Naive thymus-derived CD4-positive, alpha-beta T cell (primary cell): ENCODE measurements at regions of chr19 and their contacts with region 1.

Region 1: GRCh38 chr19:58182989-58183816 is at the start of gene ZNF274:
- DNase-seq: peak; percentile 88 to 95 (median 93)
- ATAC-seq: peak; percentile 92
- H3K4me3 ChIP-seq: peak within 1 kb of the TSS; percentile 87
- H3K4me3 Mint-ChIP-seq: peak within 1 kb of the TSS; percentile 91 to 99 (median 94)
- H3K27ac ChIP-seq: peak within 1 kb of the TSS; percentile 97
- H3K27ac Mint-ChIP-seq: peak within 1 kb of the TSS; percentile 98 to 100 (median 99)
- H3K4me1 ChIP-seq: peaks cover 0 to 12% of the 10 kb centered on the region in 2 donors
- H3K4me1 Mint-ChIP-seq: peaks cover 10 to 24% (median 17%) of the 10 kb centered on the region in 7 donors
- H3K27me3 ChIP-seq: no peaks in the 10 kb centered on the region
- H3K27me3 Mint-ChIP-seq: no peaks in the 10 kb centered on the region
- total RNA-seq, gene ZNF274: 20.1 to 91.1 (median 52.7) TPM

Region 2: DNA sequence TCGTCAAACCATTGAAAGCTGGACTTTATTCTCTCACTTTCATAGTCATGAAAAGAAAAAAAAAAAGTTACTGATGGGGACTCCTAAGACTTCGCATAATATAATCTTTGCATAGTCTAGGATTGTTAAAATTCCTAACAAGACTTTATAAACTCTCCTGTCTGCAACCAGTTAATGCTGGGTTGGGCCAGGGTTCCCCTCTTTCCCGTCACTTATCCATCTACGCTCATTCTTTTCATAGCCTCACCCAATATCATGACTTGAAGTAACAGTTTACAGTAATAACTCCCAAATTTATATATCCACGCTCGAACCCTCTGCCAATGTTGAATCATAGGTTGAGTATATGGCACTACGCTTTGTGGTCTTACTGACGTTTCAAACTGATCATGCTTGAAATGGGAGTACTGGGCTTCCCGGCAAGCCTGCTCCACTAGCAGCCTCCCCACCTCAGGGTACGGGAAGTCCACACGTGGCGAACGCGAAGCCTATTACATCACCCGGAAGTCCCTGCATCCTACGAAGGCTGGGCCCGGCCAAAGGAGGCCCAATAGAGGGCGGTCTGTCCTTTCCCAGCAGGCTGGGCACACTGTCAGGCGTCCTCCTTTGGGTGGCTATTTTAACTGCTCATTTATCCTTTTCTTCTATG is 903.7 kb before region 1 on chr19:
- CTCF ChIA-PET with region 1: no interaction called
- POLR2A ChIA-PET with region 1: no interaction called
- intact Hi-C with region 1: loop called in 1 of 2 experiments (anchors 1 kb)
- DNase-seq: peak in 6 of 9 donors; percentile 60 to 81 (median 78)
- ATAC-seq: peak; percentile 85
- H3K4me3 ChIP-seq: peak overlapping the region; percentile 80
- H3K4me3 Mint-ChIP-seq: no peak overlapping the region
- H3K27ac ChIP-seq: peak overlapping the region; percentile 98
- H3K27ac Mint-ChIP-seq: peak overlapping the region in 2 of 9 donors; percentile 6 to 51
- H3K4me1 ChIP-seq: peaks cover 18 to 23% of the 10 kb centered on the region in 2 donors
- H3K4me1 Mint-ChIP-seq: peaks cover 7 to 33% (median 25%) of the 10 kb centered on the region in 7 donors
- H3K27me3 ChIP-seq: no peaks in the 10 kb centered on the region
- H3K27me3 Mint-ChIP-seq: no peaks in the 10 kb centered on the region

Region 3: GRCh38 chr19:57746580-57747471 is 436.4 kb before region 1 on chr19 and contains the start of gene ZNF776:
- CTCF ChIA-PET with region 1: no interaction called
- POLR2A ChIA-PET with region 1: no interaction called
- intact Hi-C with region 1: loop called (anchors 1 kb)
- DNase-seq: peak; percentile 40 to 90 (median 84)
- ATAC-seq: peak; percentile 99
- H3K4me3 ChIP-seq: peak within 1 kb of the TSS; percentile 86
- H3K4me3 Mint-ChIP-seq: peak within 1 kb of the TSS; percentile 91 to 99 (median 94)
- H3K27ac ChIP-seq: peak within 1 kb of the TSS; percentile 85
- H3K27ac Mint-ChIP-seq: peak within 1 kb of the TSS; percentile 81 to 99 (median 94)
- H3K4me1 ChIP-seq: peaks cover 6 to 16% of the 10 kb centered on the region in 2 donors
- H3K4me1 Mint-ChIP-seq: peaks cover 13 to 40% (median 26%) of the 10 kb centered on the region in 7 donors
- H3K27me3 ChIP-seq: no peaks in the 10 kb centered on the region
- H3K27me3 Mint-ChIP-seq: no peaks in the 10 kb centered on the region
- total RNA-seq, gene ZNF776: 18.9 to 52.3 (median 21.8) TPM

Region 4: GRCh38 chr19:58196901-58197616 is 13.9 kb after region 1 on chr19:
- CTCF ChIA-PET with region 1: interaction called, 3 read pairs
- POLR2A ChIA-PET with region 1: interaction called, 27 read pairs
- intact Hi-C with region 1: no loop called
- DNase-seq: peak in 4 of 9 donors; percentile 19 to 37 (median 30)
- ATAC-seq: no peak
- H3K4me3 ChIP-seq: peak overlapping the region; percentile 3
- H3K4me3 Mint-ChIP-seq: peak overlapping the region in 2 of 10 donors; percentile 7 to 16
- H3K27ac ChIP-seq: no peak overlapping the region
- H3K27ac Mint-ChIP-seq: peak overlapping the region in 1 of 9 donors; percentile 17
- H3K4me1 ChIP-seq: no peaks in the 10 kb centered on the region
- H3K4me1 Mint-ChIP-seq: peaks cover 0 to 5% (median 0%) of the 10 kb centered on the region in 7 donors
- H3K27me3 ChIP-seq: no peaks in the 10 kb centered on the region
- H3K27me3 Mint-ChIP-seq: no peaks in the 10 kb centered on the region

Region 5: GRCh38 chr19:58362272-58362994 is 179.2 kb after region 1 on chr19 and contains the start of gene ZNF497:
- CTCF ChIA-PET with region 1: no interaction called
- POLR2A ChIA-PET with region 1: interaction called, 14 read pairs
- intact Hi-C with region 1: loop called in 1 of 2 experiments (anchors 1 kb)
- DNase-seq: peak; percentile 91 to 96 (median 95)
- ATAC-seq: peak; percentile 92
- H3K4me3 ChIP-seq: peak within 1 kb of the TSS; percentile 99
- H3K4me3 Mint-ChIP-seq: peak within 1 kb of the TSS; percentile 89 to 99 (median 95)
- H3K27ac ChIP-seq: peak within 1 kb of the TSS; percentile 78
- H3K27ac Mint-ChIP-seq: peak within 1 kb of the TSS; percentile 71 to 96 (median 90)
- H3K4me1 ChIP-seq: peaks cover 5 to 7% of the 10 kb centered on the region in 2 donors
- H3K4me1 Mint-ChIP-seq: peaks cover 7 to 21% (median 11%) of the 10 kb centered on the region in 7 donors
- H3K27me3 ChIP-seq: no peaks in the 10 kb centered on the region
- H3K27me3 Mint-ChIP-seq: peaks cover 0 to 5% (median 0%) of the 10 kb centered on the region in 5 donors
- total RNA-seq, gene ZNF497: 1.0 to 2.7 (median 1.8) TPM

Region 6: DNA sequence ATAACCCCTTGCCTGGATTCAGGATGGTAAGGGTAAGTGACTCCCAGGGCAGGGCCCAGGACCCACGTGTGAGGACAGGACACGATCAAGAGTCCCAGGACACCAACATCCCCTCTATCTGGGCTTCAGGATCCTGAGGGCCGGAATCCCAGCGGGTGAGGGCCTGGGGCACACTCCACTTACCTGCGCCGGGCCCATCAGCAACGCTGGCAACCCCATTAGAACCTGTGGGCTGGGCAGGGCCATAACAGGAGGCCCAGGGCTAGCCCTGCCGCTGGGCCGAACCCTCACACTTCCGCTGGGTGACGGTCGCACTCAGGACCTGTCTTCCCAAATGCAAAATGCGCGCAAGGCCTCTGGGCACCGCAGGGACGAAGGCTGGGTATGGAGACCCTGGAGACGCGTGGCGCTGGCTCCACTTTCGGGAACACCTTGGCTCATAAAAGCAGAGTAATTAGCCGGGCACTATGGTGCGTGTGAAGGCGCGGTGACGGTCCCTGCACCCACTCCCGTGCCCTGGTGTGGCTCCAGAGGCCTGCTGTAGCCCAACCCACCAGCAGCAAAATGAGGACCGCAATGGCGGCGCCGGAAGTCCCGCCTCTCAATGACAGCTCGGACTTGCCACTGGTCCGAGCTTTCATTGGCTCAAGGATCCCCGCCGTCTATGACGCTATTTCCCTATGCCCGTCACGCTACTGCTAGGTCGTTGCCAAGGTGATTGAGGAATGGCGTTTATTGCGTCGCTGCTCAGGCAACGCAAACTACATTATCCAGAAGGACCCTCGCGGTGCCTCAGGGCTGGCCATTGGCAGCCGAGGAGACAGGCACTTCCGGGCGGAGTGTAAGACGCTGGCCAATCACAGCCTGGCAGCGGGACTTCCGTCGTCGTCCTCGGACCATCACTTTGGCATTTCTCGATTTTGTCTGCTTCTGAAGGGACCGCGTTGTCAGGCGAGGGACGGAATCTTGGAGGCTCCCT is 256.7 kb after region 1 on chr19 and contains the start of gene ZNF132:
- CTCF ChIA-PET with region 1: no interaction called
- POLR2A ChIA-PET with region 1: interaction called, 4 read pairs
- intact Hi-C with region 1: loop called (anchors 1 kb)
- DNase-seq: peak; percentile 78 to 99 (median 95)
- ATAC-seq: peak; percentile 98
- H3K4me3 ChIP-seq: peak within 1 kb of the TSS; percentile 73
- H3K4me3 Mint-ChIP-seq: peak within 1 kb of the TSS; percentile 86 to 99 (median 96)
- H3K27ac ChIP-seq: peak within 1 kb of the TSS; percentile 81
- H3K27ac Mint-ChIP-seq: peak within 1 kb of the TSS; percentile 87 to 99 (median 97)
- H3K4me1 ChIP-seq: peaks cover 17% of the 10 kb centered on the region in 2 donors
- H3K4me1 Mint-ChIP-seq: peaks cover 21 to 35% (median 27%) of the 10 kb centered on the region in 7 donors
- H3K27me3 ChIP-seq: no peaks in the 10 kb centered on the region
- H3K27me3 Mint-ChIP-seq: no peaks in the 10 kb centered on the region
- total RNA-seq, gene ZNF132: 1.2 to 12.9 (median 4.9) TPM

Region 7: GRCh38 chr19:58519355-58520256 is 336.4 kb after region 1 on chr19 and contains the start of gene ZBTB45:
- CTCF ChIA-PET with region 1: no interaction called
- POLR2A ChIA-PET with region 1: interaction called, 12 read pairs
- intact Hi-C with region 1: loop called (anchors 1 kb)
- DNase-seq: peak; percentile 81 to 97 (median 88)
- ATAC-seq: peak; percentile 89
- H3K4me3 ChIP-seq: peak within 1 kb of the TSS; percentile 76
- H3K4me3 Mint-ChIP-seq: peak within 1 kb of the TSS; percentile 90 to 97 (median 95)
- H3K27ac ChIP-seq: peak within 1 kb of the TSS; percentile 86
- H3K27ac Mint-ChIP-seq: peak within 1 kb of the TSS; percentile 92 to 99 (median 97)
- H3K4me1 ChIP-seq: peaks cover 10 to 14% of the 10 kb centered on the region in 2 donors
- H3K4me1 Mint-ChIP-seq: peaks cover 29 to 43% (median 37%) of the 10 kb centered on the region in 7 donors
- H3K27me3 ChIP-seq: no peaks in the 10 kb centered on the region
- H3K27me3 Mint-ChIP-seq: peaks cover 0 to 3% (median 0%) of the 10 kb centered on the region in 5 donors
- total RNA-seq, gene ZBTB45: 9.8 to 19.2 (median 17.0) TPM